Caco-2 (cell line): ENCODE measurements at regions of chr17 and their contacts with region 1.

Region 1: GRCh38 chr17:42380935-42381334 is 7.3 kb downstream of the STAT3 start:
- DNase-seq: no peak
- H3K4me3 ChIP-seq: no peak overlapping the region
- H3K4me3 Mint-ChIP-seq: no peak overlapping the region
- H3K27ac Mint-ChIP-seq: no peak overlapping the region
- H3K4me1 ChIP-seq: peaks cover 13% of the 10 kb centered on the region
- H3K4me1 Mint-ChIP-seq: peaks cover 10% of the 10 kb centered on the region
- H3K27me3 ChIP-seq: no peaks in the 10 kb centered on the region
- H3K27me3 Mint-ChIP-seq: no peaks in the 10 kb centered on the region
- CTCF ChIP-seq: no peak

Region 2: DNA sequence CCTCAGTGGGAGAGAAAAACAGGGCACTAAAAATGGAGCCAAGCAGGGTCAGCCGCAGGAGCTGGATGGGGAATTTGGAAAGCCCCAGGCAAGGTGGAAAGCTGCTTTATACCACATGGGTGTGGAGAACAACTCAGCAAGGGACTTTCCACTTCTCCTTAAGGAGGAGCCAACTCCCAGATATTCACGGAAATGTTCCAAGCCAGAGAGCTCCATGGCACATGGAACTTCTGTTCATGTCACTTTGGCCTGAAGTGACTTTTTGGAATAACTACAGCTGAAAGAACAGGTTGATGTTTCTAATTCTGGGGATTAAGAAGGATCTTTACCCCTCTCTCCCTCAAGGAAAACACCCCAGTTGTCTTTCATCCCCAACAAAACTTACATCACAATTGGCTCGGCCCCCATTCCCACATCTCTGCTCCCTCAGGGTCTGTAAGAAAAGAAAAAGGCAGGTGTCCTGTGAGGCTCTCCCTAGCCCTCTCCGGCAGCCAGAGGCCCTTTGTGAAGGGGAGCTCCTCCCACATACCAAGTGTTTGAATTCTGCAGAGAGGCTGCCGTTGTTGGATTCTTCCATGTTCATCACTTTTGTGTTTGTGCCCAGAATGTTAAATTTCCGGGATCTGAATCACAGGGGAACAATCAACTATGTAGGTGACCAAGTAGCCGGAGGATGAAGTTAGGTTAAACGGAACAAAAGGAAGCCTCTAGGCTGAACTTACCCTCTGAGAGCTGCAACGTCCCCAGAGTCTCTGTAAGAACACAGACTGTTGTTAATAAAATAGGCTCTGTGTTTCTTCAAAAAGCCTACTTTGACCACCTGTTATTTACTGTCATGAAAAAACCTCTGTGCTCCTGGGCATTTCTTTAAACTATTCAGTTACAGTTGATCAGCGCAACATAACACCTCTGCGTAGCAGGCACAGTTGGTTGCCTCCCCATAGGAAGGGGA is 51.6 kb before region 1 on chr17:
- CTCF ChIA-PET with region 1: no interaction called
- POLR2A ChIA-PET with region 1: interaction called, 15 read pairs
- intact Hi-C with region 1: no loop called
- DNase-seq: peak; percentile 42 to 50
- H3K4me3 ChIP-seq: no peak overlapping the region
- H3K4me3 Mint-ChIP-seq: peak overlapping the region; percentile 47
- H3K27ac Mint-ChIP-seq: peak overlapping the region; percentile 92
- H3K4me1 ChIP-seq: peaks cover 31% of the 10 kb centered on the region
- H3K4me1 Mint-ChIP-seq: peaks cover 17% of the 10 kb centered on the region
- H3K27me3 ChIP-seq: no peaks in the 10 kb centered on the region
- H3K27me3 Mint-ChIP-seq: no peaks in the 10 kb centered on the region
- CTCF ChIP-seq: no peak

Region 3: DNA sequence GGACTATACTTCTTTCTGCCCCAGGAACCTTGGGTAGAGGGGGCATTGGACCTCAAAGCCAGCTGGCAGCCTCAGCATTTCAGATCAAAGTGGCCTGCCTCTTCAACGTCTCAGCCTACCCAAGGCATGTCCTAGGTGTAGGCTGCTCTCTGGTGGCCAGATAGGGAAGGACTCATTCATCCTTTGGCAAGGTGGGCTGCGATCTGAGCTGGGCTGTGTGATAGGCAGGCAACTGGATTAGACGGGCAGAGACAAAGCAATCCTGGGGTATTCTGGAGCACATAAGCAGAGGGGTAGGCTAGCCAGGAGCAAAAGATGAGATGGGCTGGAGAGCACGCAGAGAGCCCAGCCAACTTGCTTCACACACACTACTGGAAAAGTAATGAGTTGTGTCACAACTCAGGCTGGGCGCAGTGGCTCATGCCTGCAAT is 146.4 kb after region 1 on chr17:
- CTCF ChIA-PET with region 1: no interaction called
- POLR2A ChIA-PET with region 1: no interaction called
- intact Hi-C with region 1: no loop called
- DNase-seq: peak; percentile 81 to 82
- H3K4me3 ChIP-seq: no peak overlapping the region
- H3K4me3 Mint-ChIP-seq: no peak overlapping the region
- H3K27ac Mint-ChIP-seq: peak overlapping the region; percentile 55
- H3K4me1 ChIP-seq: peaks cover 46% of the 10 kb centered on the region
- H3K4me1 Mint-ChIP-seq: peaks cover 44% of the 10 kb centered on the region
- H3K27me3 ChIP-seq: no peaks in the 10 kb centered on the region
- H3K27me3 Mint-ChIP-seq: no peaks in the 10 kb centered on the region
- CTCF ChIP-seq: peak; percentile 82 to 90